ENCODE measurements at regions of chr13 and their contacts with region 1.

Region 1: DNA sequence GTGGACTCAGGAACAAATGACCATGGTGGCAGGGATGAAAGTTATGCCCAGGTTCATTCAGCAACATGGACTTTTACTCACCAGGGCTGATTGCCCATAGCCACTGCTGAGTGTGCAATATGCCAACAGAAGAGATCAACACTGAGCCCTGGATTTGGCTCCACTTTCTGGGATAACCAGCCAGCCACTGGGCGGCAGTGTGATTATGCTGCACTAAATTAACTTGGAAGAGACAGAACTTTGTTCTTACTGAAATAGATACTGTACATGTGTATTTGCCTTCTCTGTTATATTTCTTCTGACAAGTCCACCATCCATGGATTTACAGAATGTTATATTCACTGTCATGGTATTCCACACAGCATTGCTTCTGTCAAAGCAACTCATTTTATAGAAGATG is 257.4 kb downstream of the TDRD3 start:
- DNase-seq: no peak
- H3K4me3 ChIP-seq: no peak overlapping the region
- H3K27ac ChIP-seq: no peak overlapping the region
- H3K4me1 ChIP-seq: no peaks in the 10 kb centered on the region
- H3K27me3 ChIP-seq: peaks cover 2% of the 10 kb centered on the region
- CTCF ChIP-seq: peak; percentile 50 to 78

Region 2: GRCh38 chr13:60540276-60540675 is 114.1 kb before region 1 on chr13:
- CTCF ChIA-PET with region 1: no interaction called
- dilution Hi-C with region 1: no loop called
- in situ Hi-C with region 1: no loop called
- intact Hi-C with region 1: no loop called
- DNase-seq: no peak
- H3K4me3 ChIP-seq: no peak overlapping the region
- H3K27ac ChIP-seq: no peak overlapping the region
- H3K4me1 ChIP-seq: no peaks in the 10 kb centered on the region
- H3K27me3 ChIP-seq: no peaks in the 10 kb centered on the region
- CTCF ChIP-seq: no peak

Region 3: GRCh38 chr13:60572003-60572798 is 82.2 kb before region 1 on chr13:
- CTCF ChIA-PET with region 1: no interaction called
- dilution Hi-C with region 1: no loop called
- in situ Hi-C with region 1: no loop called
- intact Hi-C with region 1: no loop called
- DNase-seq: peak; percentile 91
- H3K4me3 ChIP-seq: no peak overlapping the region
- H3K27ac ChIP-seq: peak overlapping the region; percentile 15
- H3K4me1 ChIP-seq: peaks cover 10% of the 10 kb centered on the region
- H3K27me3 ChIP-seq: no peaks in the 10 kb centered on the region
- CTCF ChIP-seq: no peak

Region 4: DNA sequence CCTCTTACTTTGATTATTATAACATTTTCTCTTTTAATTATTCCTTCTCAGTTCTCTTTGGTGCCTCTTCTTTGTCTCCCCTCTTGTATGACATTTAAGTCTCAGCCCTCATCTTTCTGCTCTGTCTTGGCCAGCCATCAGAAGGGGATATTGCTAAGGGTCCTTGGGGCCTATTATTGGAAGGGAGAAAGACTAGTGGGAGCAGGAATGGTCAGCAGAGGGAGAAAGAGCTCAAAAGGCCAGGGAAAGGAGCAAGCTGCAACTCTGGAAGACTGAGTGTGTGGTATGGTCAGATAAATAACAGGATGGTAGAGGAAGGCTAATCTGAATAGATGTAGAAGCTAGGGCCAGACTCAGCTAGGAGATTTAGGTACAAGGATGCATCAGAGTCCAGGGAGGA is 79.5 kb after region 1 on chr13:
- CTCF ChIA-PET with region 1: no interaction called
- dilution Hi-C with region 1: no loop called
- in situ Hi-C with region 1: no loop called
- intact Hi-C with region 1: no loop called
- DNase-seq: no peak
- H3K4me3 ChIP-seq: no peak overlapping the region
- H3K27ac ChIP-seq: no peak overlapping the region
- H3K4me1 ChIP-seq: no peaks in the 10 kb centered on the region
- H3K27me3 ChIP-seq: peaks cover 2% of the 10 kb centered on the region
- CTCF ChIP-seq: peak in 1 of 2 donors; percentile 1

Region 5: DNA sequence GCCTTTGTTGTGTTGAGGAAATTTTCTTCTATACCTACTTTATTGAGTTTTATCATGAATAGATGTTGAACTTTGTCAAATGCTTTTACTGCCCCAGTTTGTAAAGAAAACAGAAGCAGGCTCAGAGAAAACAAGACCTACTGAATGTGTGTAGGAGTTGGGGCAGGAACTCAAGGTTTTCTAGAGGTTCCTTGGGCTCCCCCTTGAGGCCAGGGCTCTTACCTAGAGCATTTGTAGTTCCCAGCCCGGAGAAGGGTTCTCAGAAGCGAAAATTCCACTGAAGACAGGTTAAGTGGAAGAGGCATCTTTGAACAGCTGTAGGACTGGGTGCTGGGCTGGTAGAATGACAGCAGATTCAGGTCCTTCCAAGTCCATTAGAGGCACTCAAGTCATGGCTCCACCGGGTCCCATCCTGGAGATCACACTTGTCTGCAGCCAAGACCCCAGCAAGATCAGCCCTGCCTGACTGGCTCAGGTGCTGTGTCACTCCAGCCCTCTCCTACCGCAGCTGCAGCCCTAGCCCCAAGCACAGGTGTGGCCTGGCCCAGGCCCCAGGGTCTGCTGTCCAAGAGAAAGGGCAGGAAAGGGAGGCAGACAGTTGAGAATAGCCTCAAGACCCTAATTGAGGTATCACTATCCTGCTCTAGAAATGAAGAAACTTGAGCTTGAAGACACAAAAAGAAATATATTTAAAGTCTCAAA is 335.8 kb after region 1 on chr13:
- CTCF ChIA-PET with region 1: no interaction called
- dilution Hi-C with region 1: no loop called
- in situ Hi-C with region 1: no loop called
- intact Hi-C with region 1: loop called (anchors 1 kb)
- DNase-seq: no peak
- H3K4me3 ChIP-seq: no peak overlapping the region
- H3K27ac ChIP-seq: no peak overlapping the region
- H3K4me1 ChIP-seq: no peaks in the 10 kb centered on the region
- H3K27me3 ChIP-seq: no peaks in the 10 kb centered on the region
- CTCF ChIP-seq: peak; percentile 12 to 55

Region 6: DNA sequence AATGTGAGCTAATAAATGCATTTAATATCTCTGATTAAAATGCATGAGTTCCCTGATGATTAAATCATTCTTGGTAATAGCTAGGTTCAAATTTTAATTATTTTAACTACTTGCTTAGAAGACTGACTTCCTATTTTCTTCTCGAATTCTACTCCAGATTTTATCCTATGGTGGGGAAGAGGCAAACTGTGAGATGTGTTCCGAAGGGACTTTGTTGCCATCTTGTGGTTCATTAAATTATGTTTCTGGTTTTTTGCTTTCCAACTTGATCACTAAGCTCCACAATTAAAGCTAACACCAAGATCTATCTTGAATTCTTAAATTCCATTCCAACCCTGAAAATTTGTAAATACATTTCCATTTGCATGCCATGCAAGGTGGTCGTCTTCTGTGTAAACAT is 1299.7 kb after region 1 on chr13:
- CTCF ChIA-PET with region 1: no interaction called
- dilution Hi-C with region 1: no loop called
- in situ Hi-C with region 1: no loop called
- intact Hi-C with region 1: loop called (anchors 10 kb)
- DNase-seq: no peak
- H3K4me3 ChIP-seq: no peak overlapping the region
- H3K27ac ChIP-seq: no peak overlapping the region
- H3K4me1 ChIP-seq: no peaks in the 10 kb centered on the region
- H3K27me3 ChIP-seq: no peaks in the 10 kb centered on the region
- CTCF ChIP-seq: peak in 1 of 2 donors; percentile 42

Measured in mammary epithelial cell (primary cell).